Activated B cell treated with CpG ODN at 0.5 μM for 24 hours (primary cell): ENCODE measurements at regions of chr19 and their contacts with region 1.

Region 1: GRCh38 chr19:45103156-45103507 is 10.2 kb downstream of the PPP1R37 start:
- DNase-seq: no peak
- ATAC-seq: peak; percentile 69
- H3K4me3 Mint-ChIP-seq: peak overlapping the region; percentile 57
- H3K27ac Mint-ChIP-seq: peak overlapping the region; percentile 77
- H3K4me1 Mint-ChIP-seq: peaks cover 65% of the 10 kb centered on the region
- H3K27me3 Mint-ChIP-seq: no peaks in the 10 kb centered on the region
- CTCF ChIP-seq: no peak

Region 2: DNA sequence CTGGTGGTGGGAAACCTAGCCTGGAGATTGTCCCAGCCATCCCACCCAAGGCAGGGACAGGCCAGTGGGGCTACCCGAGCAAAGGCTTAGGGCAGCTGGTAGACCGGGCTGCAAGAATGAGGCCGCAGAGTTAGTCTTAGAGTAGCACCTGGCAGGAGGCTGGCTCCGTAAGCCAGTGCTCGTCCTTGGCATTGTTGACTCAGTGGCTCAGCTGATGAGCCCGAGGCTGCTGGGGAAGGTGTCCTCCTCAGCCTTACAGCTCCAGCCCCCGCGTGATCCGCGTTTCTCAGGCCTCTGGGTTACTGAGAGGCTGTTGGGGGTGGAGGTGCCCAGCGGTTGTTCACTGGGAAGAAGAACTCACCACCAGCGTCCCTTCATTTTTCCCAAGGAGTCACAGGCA is 14.5 kb after region 1 on chr19:
- CTCF ChIA-PET with region 1: interaction called, 4 read pairs
- POLR2A ChIA-PET with region 1: interaction called, 3 read pairs
- intact Hi-C with region 1: loop called (anchors 2 kb)
- DNase-seq: no peak
- ATAC-seq: no peak
- H3K4me3 Mint-ChIP-seq: no peak overlapping the region
- H3K27ac Mint-ChIP-seq: no peak overlapping the region
- H3K4me1 Mint-ChIP-seq: peaks cover 82% of the 10 kb centered on the region
- H3K27me3 Mint-ChIP-seq: no peaks in the 10 kb centered on the region
- CTCF ChIP-seq: no peak